H1 (cell line): ENCODE measurements at regions of chr1 and their contacts with region 1.

Region 1: GRCh38 chr1:44059956-44060355 is 28.7 kb upstream of the SLC6A9 start:
- DNase-seq: no peak
- H3K4me3 ChIP-seq: no peak overlapping the region
- H3K27ac ChIP-seq: no peak overlapping the region
- H3K4me1 ChIP-seq: no peaks in the 10 kb centered on the region
- H3K27me3 ChIP-seq: no peaks in the 10 kb centered on the region; a peak in 2 of 7 replicates
- CTCF ChIP-seq: no peak
- EP300 ChIP-seq: no peak
- POLR2A ChIP-seq: no peak
- RAD21 ChIP-seq: no peak

Region 2: DNA sequence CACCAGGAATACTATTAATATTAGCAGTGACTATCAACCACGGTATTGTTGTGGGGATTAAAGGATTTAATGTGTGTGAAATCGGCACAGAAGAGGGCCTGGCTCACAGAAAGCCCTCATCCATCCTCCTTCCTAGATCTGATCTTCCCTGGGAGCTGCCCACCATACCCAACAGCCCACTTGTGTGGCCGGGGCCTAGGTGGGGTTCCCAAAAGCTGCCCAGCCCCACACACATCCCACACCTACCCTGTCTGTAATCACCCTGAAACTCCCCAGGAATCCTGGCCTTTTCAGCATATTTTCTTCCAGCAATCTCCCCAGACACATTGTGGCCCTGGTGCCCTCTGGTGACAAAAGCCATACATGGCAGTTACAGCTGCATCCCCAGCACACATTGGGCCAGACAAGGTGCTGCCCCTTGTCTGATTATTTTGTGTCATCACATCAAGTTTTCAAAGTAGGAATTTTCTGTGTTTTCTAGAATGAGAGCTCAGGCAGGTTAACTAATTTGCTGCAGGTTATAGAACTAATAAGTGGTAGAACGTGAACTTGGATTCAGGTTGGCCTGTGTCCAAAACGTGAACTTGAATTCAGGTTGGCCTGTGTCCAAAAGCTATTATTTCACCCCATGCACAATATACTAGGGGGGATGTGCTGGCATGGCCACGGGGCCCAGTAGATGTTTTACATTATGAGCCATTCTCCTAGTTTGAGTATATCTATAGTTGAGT is 23.4 kb before region 1 on chr1:
- CTCF ChIA-PET with region 1: interaction called, 22 read pairs
- POLR2A ChIA-PET with region 1: interaction called, 3 read pairs
- DNase-seq: peak; percentile 23 to 80
- H3K4me3 ChIP-seq: no peak overlapping the region
- H3K27ac ChIP-seq: no peak overlapping the region
- H3K4me1 ChIP-seq: peaks cover 6 to 20% (median 12%) of the 10 kb centered on the region in 4 experiments; a peak in 6 of 7 replicates
- H3K27me3 ChIP-seq: no peaks in the 10 kb centered on the region
- CTCF ChIP-seq: peak; percentile 90 to 92 (median 91)
- EP300 ChIP-seq: no peak
- POLR2A ChIP-seq: no peak
- RAD21 ChIP-seq: peak; percentile 81 to 88